ENCODE measurements at regions of chr11 and their contacts with region 1.

Region 1: DNA sequence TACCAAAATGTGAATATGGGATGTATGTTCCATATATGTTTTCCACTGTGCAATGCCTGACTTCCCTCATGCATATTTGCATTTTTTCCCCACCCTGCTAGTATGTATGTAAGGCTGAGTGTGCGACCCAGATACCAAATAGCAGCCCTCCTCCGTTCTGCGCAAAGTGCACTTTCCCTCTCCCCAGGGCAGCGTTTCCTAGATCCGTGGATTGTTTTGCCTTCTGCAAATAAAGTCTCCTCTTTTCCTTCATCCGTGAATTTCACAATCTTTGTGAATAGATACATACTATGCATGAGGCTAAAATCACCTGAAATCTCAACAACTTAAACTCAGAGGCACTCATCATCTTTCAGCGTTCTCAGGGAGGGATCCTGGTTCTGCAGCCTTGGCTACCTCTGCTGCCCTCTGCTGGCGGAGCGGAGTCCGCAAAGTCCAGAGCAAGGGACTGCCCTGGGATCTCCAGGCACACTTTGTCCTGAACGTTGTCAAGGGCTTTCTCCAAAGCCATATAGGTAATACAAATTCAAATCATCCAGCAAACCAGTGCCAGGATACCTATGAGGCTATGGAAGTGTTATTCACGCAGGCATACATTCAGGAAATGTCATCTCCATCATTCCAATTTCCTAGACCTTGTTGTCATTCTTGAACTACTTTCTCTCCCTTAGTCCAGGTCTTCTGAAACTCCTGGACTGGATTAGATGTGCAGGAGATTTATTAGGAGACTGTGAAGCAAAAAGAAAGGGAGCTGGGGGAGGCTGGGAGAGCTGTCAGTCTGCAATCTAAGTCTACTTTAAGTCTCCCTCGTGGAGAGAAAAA is 53.1 kb downstream of the CNTF start:
- DNase-seq: peak; percentile 67
- ATAC-seq: peak; percentile 80
- H3K4me3 Mint-ChIP-seq: no peak overlapping the region
- H3K27ac Mint-ChIP-seq: no peak overlapping the region
- H3K4me1 Mint-ChIP-seq: no peaks in the 10 kb centered on the region
- H3K27me3 Mint-ChIP-seq: peaks cover 3% of the 10 kb centered on the region
- CTCF ChIP-seq: peak; percentile 59

Region 2: DNA sequence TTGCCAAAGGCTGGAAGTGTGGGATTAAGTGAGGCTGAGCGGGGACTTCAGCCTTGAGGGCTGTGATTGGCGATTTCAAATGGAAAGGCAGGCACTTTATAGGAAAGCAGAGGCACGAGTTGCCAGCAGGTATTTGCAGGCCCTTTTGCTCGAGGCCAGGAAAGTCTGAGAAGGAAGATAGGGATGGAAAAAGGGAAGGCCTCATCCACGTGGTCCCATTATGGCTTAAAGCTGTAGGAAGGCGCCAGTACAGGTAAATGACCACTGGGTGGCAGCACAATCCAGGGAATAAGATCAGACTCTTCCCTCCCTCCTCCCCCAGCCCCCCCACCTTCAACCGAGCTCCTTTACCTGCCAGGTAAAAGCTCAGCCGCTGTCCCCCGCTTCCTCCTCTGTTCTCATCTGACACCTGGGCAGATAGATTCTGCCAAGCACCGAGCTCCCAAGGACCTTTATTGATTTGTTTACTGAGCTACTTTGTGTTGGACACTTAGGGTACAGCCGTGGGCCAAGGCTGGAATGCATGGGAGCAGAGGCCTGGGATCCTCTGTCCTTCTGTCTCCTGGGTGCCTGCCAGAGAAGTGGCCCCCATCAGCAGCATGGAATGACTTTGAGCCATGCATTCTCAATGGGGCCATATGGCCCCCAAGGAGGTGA is 1329.9 kb before region 1 on chr11:
- CTCF ChIA-PET with region 1: interaction called, 3 read pairs
- POLR2A ChIA-PET with region 1: no interaction called
- intact Hi-C with region 1: loop called (anchors 2 kb)
- DNase-seq: peak; percentile 40
- ATAC-seq: peak; percentile 91
- H3K4me3 Mint-ChIP-seq: no peak overlapping the region
- H3K27ac Mint-ChIP-seq: no peak overlapping the region
- H3K4me1 Mint-ChIP-seq: peaks cover 3% of the 10 kb centered on the region
- H3K27me3 Mint-ChIP-seq: peaks cover 3% of the 10 kb centered on the region
- CTCF ChIP-seq: no peak

Region 3: GRCh38 chr11:58567889-58568512 is 107.5 kb before region 1 on chr11:
- CTCF ChIA-PET with region 1: interaction called, 8 read pairs
- POLR2A ChIA-PET with region 1: no interaction called
- intact Hi-C with region 1: loop called (anchors 1 kb)
- DNase-seq: peak; percentile 54
- ATAC-seq: peak; percentile 99
- H3K4me3 Mint-ChIP-seq: no peak overlapping the region
- H3K27ac Mint-ChIP-seq: peak overlapping the region; percentile 36
- H3K4me1 Mint-ChIP-seq: peaks cover 40% of the 10 kb centered on the region
- H3K27me3 Mint-ChIP-seq: no peaks in the 10 kb centered on the region
- CTCF ChIP-seq: peak; percentile 53

Region 4: GRCh38 chr11:58654079-58654907 is 21.3 kb before region 1 on chr11:
- CTCF ChIA-PET with region 1: interaction called, 7 read pairs
- POLR2A ChIA-PET with region 1: no interaction called
- intact Hi-C with region 1: loop called (anchors 1 kb)
- DNase-seq: peak; percentile 69
- ATAC-seq: peak; percentile 99
- H3K4me3 Mint-ChIP-seq: no peak overlapping the region
- H3K27ac Mint-ChIP-seq: no peak overlapping the region
- H3K4me1 Mint-ChIP-seq: peaks cover 5% of the 10 kb centered on the region
- H3K27me3 Mint-ChIP-seq: no peaks in the 10 kb centered on the region
- CTCF ChIP-seq: peak; percentile 25

Region 5: DNA sequence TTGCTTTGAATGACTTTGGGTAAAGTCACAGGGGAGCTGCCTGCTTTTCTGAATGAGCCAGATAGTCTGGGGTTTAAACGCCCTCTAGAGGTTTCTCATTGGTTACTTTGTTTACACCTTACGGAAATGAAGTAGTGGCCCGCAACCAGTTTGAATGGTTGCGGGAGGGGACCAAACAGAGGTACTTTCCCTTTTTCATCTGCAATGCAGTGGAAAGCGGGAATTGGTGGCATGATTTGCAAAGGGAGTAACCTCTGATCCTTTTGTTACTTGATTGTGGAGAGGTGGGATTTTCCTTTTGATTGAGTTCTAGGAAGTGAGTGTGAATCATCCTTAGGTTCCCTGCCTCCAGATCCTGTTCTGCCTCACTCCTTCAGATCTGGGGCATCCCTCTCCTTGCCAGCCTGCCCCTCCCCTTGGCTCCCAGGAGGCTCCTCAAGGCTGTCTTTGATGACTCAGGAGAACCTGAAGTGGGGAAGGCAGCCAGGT is 247.8 kb after region 1 on chr11:
- CTCF ChIA-PET with region 1: no interaction called
- POLR2A ChIA-PET with region 1: no interaction called
- intact Hi-C with region 1: loop called (anchors 10 kb)
- DNase-seq: no peak
- ATAC-seq: peak; percentile 74
- H3K4me3 Mint-ChIP-seq: no peak overlapping the region
- H3K27ac Mint-ChIP-seq: no peak overlapping the region
- H3K4me1 Mint-ChIP-seq: peaks cover 24% of the 10 kb centered on the region
- H3K27me3 Mint-ChIP-seq: peaks cover 5% of the 10 kb centered on the region
- CTCF ChIP-seq: no peak

Region 6: GRCh38 chr11:59560702-59561469 is 885.3 kb after region 1 on chr11:
- CTCF ChIA-PET with region 1: no interaction called
- POLR2A ChIA-PET with region 1: no interaction called
- intact Hi-C with region 1: no loop called
- DNase-seq: peak; percentile 62
- ATAC-seq: peak; percentile 78
- H3K4me3 Mint-ChIP-seq: peak overlapping the region; percentile 92
- H3K27ac Mint-ChIP-seq: peak overlapping the region; percentile 91
- H3K4me1 Mint-ChIP-seq: peaks cover 43% of the 10 kb centered on the region
- H3K27me3 Mint-ChIP-seq: peaks cover 3% of the 10 kb centered on the region
- CTCF ChIP-seq: no peak